GM12878 (cell line): ENCODE measurements at regions of chr11 and their contacts with region 1.

Region 1: DNA sequence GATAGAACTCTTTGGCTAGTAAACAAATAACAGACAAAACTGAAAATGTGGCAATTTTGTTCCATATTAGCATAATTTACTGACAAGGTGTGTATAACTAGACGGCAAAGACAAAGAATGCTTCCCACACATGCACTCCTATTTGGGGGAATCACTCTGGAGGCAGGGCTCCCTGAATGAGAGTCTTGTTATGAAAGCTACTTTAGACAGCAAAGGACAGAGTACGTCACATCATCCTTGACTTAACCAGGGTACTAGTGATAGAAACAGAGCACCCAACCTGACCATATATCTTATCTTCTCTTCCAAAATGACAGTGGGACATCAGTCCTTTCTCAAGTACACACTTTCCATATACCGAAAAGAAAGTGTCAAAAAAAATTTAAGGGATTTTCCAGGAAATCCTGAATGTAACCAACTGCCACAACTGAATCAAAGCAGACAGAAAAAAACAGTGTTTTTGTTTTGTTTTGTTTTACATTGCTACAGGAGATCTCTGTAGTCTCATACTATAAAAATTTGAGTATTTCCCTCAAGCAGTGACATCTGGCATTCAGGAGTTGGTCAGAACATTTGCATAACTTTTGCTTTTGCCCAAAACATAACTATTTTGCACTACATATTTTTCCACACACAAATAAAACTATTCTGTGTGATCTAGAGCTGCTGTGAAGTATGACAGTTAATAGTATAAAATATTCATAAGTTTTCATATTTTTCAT is 98.9 kb downstream of the ARHGAP20 start:
- DNase-seq: no peak
- ATAC-seq: no peak
- H3K4me3 ChIP-seq: no peak overlapping the region
- H3K27ac ChIP-seq: no peak overlapping the region
- H3K4me1 ChIP-seq: no peaks in the 10 kb centered on the region
- H3K27me3 ChIP-seq: no peaks in the 10 kb centered on the region
- CTCF ChIP-seq: no peak
- EP300 ChIP-seq: no peak
- POLR2A ChIP-seq: no peak
- RAD21 ChIP-seq: no peak

Region 2: GRCh38 chr11:110587972-110588371 is 25.4 kb before region 1 on chr11:
- CTCF ChIA-PET with region 1: interaction called, 11 read pairs
- POLR2A ChIA-PET with region 1: no interaction called
- RAD21 ChIA-PET with region 1: no interaction called
- SMC1A ChIA-PET with region 1: interaction called, 3 read pairs
- in situ Hi-C with region 1: no loop called
- intact Hi-C with region 1: no loop called
- DNase-seq: no peak
- ATAC-seq: no peak
- H3K4me3 ChIP-seq: no peak overlapping the region
- H3K27ac ChIP-seq: no peak overlapping the region
- H3K4me1 ChIP-seq: no peaks in the 10 kb centered on the region
- H3K27me3 ChIP-seq: no peaks in the 10 kb centered on the region
- CTCF ChIP-seq: no peak
- EP300 ChIP-seq: no peak
- POLR2A ChIP-seq: no peak
- RAD21 ChIP-seq: no peak

Region 3: DNA sequence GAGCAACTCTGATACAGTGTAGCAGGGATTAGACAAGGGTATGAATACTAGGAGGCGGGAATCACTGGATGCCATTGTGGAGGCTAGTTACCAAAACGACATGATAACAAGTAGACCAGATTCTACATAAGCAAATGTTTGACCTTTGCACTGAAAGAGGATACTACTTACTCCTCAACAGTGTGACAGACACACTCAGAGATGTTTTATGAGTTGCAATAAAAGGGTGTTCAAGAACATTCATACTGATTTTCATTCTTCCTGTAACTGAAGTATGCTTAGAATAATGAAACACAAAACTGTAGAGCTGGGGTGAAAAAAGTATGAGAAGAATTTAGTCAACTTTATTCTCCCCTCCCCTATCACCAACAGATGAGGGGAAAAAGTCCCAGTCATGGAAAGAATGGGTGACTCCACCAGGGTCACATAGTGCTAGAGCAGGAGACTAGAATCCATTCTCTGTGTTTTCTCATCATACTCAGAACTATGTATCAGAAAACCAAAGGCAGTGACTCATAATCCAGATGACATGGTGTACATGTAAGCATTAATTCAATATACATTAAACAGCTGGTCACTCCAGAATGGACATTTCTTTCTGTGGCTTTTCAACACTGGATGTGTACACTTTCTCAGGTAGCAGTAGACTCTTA is 66.1 kb after region 1 on chr11:
- CTCF ChIA-PET with region 1: no interaction called
- POLR2A ChIA-PET with region 1: no interaction called
- RAD21 ChIA-PET with region 1: no interaction called
- SMC1A ChIA-PET with region 1: no interaction called
- in situ Hi-C with region 1: no loop called
- intact Hi-C with region 1: no loop called
- DNase-seq: no peak
- ATAC-seq: no peak
- H3K4me3 ChIP-seq: no peak overlapping the region
- H3K27ac ChIP-seq: no peak overlapping the region
- H3K4me1 ChIP-seq: no peaks in the 10 kb centered on the region
- H3K27me3 ChIP-seq: no peaks in the 10 kb centered on the region
- CTCF ChIP-seq: no peak
- EP300 ChIP-seq: no peak
- POLR2A ChIP-seq: no peak
- RAD21 ChIP-seq: no peak